Left cardiac atrium (tissue), 4 donors: ENCODE measurements at regions of chr6 and their contacts with region 1.

Region 1: DNA sequence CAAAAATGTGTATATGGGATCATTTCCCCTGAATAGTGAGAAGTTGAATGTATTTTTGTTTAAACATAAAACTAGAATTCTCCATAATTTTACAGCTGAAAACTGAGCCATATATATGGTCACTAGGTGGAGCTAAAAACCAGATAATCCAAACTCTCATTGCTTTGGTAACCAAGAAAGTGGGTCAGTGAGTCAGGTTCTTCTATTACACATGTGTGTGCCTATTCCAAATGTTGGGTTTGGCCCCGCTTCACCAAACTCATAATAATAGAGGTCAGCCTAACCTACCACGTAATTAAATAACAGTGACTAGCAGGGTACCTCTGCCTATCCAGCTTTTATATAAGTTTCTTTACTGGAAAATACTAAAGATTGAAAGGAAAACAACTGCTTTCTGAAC is 19.3 kb upstream of the RNGTT start:
- DNase-seq: peak; percentile 43
- ATAC-seq: peak; percentile 94 to 99

Region 2: GRCh38 chr6:88804701-88805100 is 178.0 kb before region 1 on chr6:
- intact Hi-C with region 1: no loop called
- DNase-seq: no peak
- ATAC-seq: no peak

Region 3: DNA sequence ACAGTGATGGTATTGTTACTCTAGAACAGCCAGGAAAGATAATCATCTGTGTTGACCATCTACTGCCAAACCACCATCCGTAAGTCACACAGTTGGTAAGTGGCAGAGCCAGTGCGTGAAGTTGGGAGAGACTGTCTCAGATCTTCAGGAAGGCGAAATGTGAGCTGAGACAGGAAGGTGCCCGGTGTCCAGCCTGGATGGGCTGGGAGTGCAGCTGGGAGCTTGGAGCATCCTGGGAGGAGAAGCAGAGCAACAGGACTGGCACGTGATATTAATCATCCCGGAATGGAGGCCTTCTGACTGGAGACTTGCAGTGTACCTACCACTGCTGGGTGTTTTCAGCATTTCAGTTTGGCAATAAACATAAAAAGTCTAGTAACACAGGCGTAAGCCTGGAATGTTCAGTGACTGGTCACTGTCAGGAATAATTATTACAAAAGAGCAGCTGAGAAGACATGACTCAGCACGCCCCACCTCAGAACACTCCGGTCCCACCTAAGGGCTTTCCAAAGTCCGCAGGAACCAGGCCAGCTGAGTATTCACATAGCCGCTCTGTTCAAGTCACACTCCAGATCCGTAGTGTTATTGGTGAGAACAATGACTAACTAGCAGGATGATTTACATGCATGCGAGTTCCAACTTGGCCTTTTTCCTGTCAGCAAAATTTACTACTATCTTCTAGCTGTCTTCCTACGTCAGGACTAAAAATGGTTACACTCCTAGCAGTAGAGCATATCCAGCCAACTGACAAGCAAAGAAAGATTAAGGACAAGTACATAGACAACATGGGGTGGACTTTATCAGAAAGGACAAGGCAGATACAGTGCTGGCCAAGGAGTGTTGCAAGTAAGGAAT is 52.8 kb after region 1 on chr6:
- intact Hi-C with region 1: loop called in 1 of 2 experiments (anchors 2 kb)
- DNase-seq: peak; percentile 93
- ATAC-seq: peak; percentile 93 to 94

Region 4: GRCh38 chr6:89080542-89081422 is 98.1 kb after region 1 on chr6 and contains the start of gene PNRC1:
- intact Hi-C with region 1: loop called in 1 of 2 experiments (anchors 5 kb)
- DNase-seq: peak; percentile 100
- ATAC-seq: peak; percentile 89 to 90
- total RNA-seq, gene PNRC1: 177 to 202 TPM

Region 5: GRCh38 chr6:89117211-89118108 is 134.7 kb after region 1 on chr6 and contains the start of gene SRSF12:
- intact Hi-C with region 1: loop called in 1 of 2 experiments (anchors 10 kb)
- DNase-seq: peak; percentile 47
- ATAC-seq: peak; percentile 85 to 93
- total RNA-seq, gene SRSF12: 0.09 to 0.65 TPM

Region 6: GRCh38 chr6:89242574-89243330 is 260.0 kb after region 1 on chr6:
- intact Hi-C with region 1: loop called (anchors 2 to 5 kb)
- DNase-seq: no peak
- ATAC-seq: no peak

Region 7: DNA sequence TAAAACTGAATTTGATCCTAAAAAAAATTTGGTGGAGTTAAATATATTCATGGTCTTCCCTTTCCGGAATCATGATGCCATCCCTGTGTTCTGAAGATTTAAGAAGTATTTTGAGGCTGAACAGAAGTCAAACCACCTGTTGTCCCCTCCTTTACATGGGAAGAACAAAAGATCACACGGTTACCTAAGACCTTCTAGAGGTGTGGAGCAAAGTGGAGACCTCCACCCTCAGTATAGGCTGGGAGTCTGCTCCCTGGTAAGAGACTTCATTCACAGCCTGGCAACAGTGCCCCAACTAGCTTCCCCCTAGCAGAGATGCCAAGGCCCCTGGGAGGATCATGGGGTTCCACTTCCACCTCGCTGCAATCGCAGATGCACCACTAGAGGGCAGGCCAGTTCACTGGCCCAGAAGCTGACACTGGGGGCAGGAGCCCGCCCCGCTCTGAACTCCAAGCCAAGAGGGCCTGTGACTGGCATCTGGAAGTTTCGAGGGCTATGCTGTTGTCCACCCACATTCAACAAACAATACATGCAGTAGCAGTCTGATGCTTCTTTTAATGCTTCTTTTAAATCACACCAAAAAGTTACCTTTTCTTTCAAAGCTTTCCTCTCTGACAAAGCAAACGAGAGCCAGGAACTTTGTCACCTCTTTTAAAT is 389.3 kb after region 1 on chr6:
- intact Hi-C with region 1: loop called in 1 of 2 experiments (anchors 10 kb)
- DNase-seq: peak; percentile 80
- ATAC-seq: peak; percentile 88 to 93